ENCODE measurements at regions of chr20 and their contacts with region 1.

Region 1: GRCh38 chr20:50172347-50173013 is 18.1 kb upstream of the CEBPB start:
- DNase-seq: peak; percentile 79
- H3K4me3 ChIP-seq: peak overlapping the region; percentile 43 to 47 (median 44)
- H3K27ac ChIP-seq: peak overlapping the region; percentile 75
- H3K4me1 ChIP-seq: peaks cover 14% of the 10 kb centered on the region
- H3K27me3 ChIP-seq: no peaks in the 10 kb centered on the region
- CTCF ChIP-seq: no peak

Region 2: DNA sequence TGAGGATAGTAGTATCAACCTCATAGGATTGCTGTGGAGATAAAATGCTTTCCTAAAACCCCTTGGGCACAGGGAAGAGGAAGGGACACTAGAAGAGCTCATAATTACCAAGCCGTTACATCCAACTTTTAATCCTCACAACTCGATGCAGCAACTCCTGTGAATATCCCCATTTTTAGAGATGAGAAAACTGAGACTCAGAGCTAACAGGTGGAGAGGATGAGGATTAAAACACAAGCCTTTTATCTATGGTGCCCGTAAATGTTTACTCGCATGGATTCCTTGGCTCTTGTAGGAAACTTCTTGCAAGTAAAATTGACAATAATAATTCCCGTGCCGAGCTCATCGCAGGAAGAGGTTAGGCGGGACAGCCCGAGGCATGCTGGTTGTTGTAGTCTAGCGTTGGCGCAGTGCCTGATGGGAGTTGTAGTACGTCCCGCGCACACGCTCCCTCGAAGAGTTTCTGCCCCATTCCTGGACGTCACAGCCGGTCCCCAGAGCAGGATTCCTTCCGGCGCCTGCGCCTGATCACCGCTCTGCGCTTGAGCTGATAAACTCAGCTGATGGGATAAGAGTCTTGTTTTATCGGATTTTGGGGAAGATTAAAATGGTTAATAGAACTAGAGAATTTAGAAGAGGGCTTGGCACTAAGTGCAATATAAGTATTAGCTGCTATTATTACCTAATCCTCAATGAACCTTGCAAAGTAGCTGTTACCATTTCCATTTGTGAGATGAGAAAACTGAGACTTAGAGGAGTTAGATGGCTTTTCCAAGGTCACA is 56.7 kb before region 1 on chr20:
- CTCF ChIA-PET with region 1: interaction called, 11 read pairs
- dilution Hi-C with region 1: no loop called
- in situ Hi-C with region 1: loop called (anchors 5 to 10 kb)
- intact Hi-C with region 1: no loop called
- DNase-seq: peak; percentile 91
- H3K4me3 ChIP-seq: peak overlapping the region; percentile 46 to 63 (median 60)
- H3K27ac ChIP-seq: peak overlapping the region; percentile 57
- H3K4me1 ChIP-seq: peaks cover 26% of the 10 kb centered on the region
- H3K27me3 ChIP-seq: no peaks in the 10 kb centered on the region
- CTCF ChIP-seq: no peak

Measured in mammary epithelial cell (primary cell).